ENCODE measurements at regions of chr3 and their contacts with region 1.

Region 1: GRCh38 chr3:111616417-111617105 is 21.4 kb upstream of the ZBED2 start:
- DNase-seq: peak; percentile 73
- H3K4me3 Mint-ChIP-seq: no peak overlapping the region
- H3K27ac Mint-ChIP-seq: peak overlapping the region; percentile 87
- H3K4me1 Mint-ChIP-seq: peaks cover 65% of the 10 kb centered on the region
- H3K27me3 Mint-ChIP-seq: no peaks in the 10 kb centered on the region

Region 2: GRCh38 chr3:111539351-111540331 is 76.9 kb before region 1 on chr3:
- CTCF ChIA-PET with region 1: interaction called, 14 read pairs
- POLR2A ChIA-PET with region 1: interaction called, 75 read pairs
- DNase-seq: peak; percentile 74
- H3K4me3 Mint-ChIP-seq: peak overlapping the region; percentile 70
- H3K27ac Mint-ChIP-seq: peak overlapping the region; percentile 82
- H3K4me1 Mint-ChIP-seq: peaks cover 53% of the 10 kb centered on the region
- H3K27me3 Mint-ChIP-seq: no peaks in the 10 kb centered on the region

Region 3: DNA sequence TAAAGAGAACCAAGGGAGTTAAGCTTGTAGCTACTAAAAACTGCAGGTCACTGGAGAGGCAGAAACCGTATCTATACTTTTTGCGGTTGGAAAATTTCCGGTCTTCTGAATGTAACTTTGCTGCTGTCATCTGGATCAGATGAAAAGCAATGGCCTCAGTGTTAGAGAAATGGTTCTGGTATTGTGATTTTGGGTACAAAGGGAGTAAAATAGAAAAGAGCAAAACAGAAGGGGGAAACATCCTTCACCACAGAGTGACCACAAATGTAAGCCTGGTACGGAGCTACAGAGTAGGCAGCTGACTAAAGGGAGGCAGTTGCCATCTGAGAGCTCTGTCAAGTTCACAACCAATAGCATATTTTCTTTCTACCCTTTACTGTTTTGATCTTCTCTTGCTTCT is 68.9 kb before region 1 on chr3:
- CTCF ChIA-PET with region 1: interaction called, 14 read pairs
- POLR2A ChIA-PET with region 1: interaction called, 75 read pairs
- DNase-seq: peak; percentile 63
- H3K4me3 Mint-ChIP-seq: no peak overlapping the region
- H3K27ac Mint-ChIP-seq: no peak overlapping the region
- H3K4me1 Mint-ChIP-seq: peaks cover 29% of the 10 kb centered on the region
- H3K27me3 Mint-ChIP-seq: no peaks in the 10 kb centered on the region

Region 4: DNA sequence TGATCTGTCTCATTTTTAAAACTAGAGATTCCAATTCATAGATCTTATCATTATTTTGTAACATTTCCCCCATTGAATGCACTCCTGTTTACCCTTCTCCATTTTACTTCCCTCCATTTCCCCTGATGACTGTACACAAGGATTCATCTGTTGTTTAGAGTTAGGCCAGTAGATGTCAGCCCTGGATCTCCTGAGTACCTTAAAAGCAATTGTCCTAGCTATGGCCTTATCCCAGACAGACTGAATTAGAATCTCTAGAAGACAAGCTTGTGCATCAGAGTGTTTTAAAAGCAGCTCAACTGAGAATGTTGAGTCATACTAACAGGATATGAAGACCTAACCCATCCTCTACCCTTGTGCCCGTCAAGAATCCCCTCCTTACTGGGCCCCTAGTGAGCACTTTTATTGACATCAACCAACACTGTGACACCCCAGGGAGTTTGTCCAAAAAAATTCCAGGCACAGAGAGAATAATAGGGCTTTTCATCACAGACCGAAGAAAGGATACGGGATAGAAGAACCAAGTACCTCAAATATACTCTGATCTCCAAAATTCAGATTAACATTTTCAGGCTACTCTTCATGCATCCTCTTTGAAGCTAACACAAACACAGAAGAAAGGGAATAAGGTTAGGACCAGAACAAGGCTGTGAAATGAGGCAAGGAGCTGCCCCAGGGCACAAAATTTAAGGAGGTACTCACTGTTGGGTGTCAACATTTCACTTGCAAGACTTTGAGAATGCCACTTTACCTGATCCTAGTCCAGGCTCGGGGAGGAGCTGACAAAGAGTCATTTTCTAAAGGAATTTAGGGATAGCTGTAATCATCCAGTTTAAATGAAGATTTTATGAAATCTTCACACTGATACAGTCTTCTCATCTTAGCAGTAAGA is 38.5 kb before region 1 on chr3:
- CTCF ChIA-PET with region 1: interaction called, 35 read pairs
- POLR2A ChIA-PET with region 1: interaction called, 21 read pairs
- DNase-seq: no peak
- H3K4me3 Mint-ChIP-seq: no peak overlapping the region
- H3K27ac Mint-ChIP-seq: peak overlapping the region; percentile 68
- H3K4me1 Mint-ChIP-seq: peaks cover 67% of the 10 kb centered on the region
- H3K27me3 Mint-ChIP-seq: no peaks in the 10 kb centered on the region

Region 5: DNA sequence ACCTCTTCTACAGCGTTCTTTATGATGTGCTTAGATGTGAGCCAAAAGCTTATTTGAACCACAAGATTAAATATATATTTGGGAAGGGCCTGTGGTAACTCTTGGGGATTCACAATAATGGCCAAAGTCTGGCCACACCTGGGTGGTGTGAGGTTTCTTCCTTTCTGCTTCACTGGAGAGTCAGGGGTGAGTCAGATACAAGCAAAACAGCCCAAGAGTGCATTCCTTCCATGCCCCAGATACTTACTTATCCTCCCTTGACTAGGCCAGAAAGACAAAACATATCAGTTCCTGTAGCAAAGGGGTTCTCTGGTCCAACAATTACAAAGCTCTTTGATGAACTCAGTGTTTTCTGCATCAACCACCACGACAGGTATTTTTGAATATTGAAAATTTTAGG is 22.4 kb before region 1 on chr3:
- CTCF ChIA-PET with region 1: interaction called, 26 read pairs
- POLR2A ChIA-PET with region 1: interaction called, 45 read pairs
- DNase-seq: no peak
- H3K4me3 Mint-ChIP-seq: peak overlapping the region; percentile 71
- H3K27ac Mint-ChIP-seq: peak overlapping the region; percentile 85
- H3K4me1 Mint-ChIP-seq: peaks cover 86% of the 10 kb centered on the region
- H3K27me3 Mint-ChIP-seq: no peaks in the 10 kb centered on the region

Region 6: GRCh38 chr3:111604119-111604518 is 12.4 kb before region 1 on chr3:
- CTCF ChIA-PET with region 1: interaction called, 9 read pairs
- POLR2A ChIA-PET with region 1: interaction called, 22 read pairs
- DNase-seq: no peak
- H3K4me3 Mint-ChIP-seq: no peak overlapping the region
- H3K27ac Mint-ChIP-seq: peak overlapping the region; percentile 86
- H3K4me1 Mint-ChIP-seq: peaks cover 83% of the 10 kb centered on the region
- H3K27me3 Mint-ChIP-seq: no peaks in the 10 kb centered on the region